Heart right ventricle (tissue), 16 donors: ENCODE measurements at regions of chr12 and their contacts with region 1.

Region 1: GRCh38 chr12:19186722-19187661 is 57.5 kb downstream of the PLEKHA5 start:
- DNase-seq: no peak
- ATAC-seq: peak in 6 of 8 donors; percentile 19 to 64 (median 44)
- H3K4me3 ChIP-seq: no peak overlapping the region
- H3K27ac ChIP-seq: peak overlapping the region in 9 of 10 donors; percentile 17 to 81 (median 41)
- H3K4me1 ChIP-seq: peaks cover 6 to 88% (median 57%) of the 10 kb centered on the region in 9 donors
- H3K27me3 ChIP-seq: no peaks in the 10 kb centered on the region
- CTCF ChIP-seq: peak; percentile 56 to 80 (median 72)

Region 2: DNA sequence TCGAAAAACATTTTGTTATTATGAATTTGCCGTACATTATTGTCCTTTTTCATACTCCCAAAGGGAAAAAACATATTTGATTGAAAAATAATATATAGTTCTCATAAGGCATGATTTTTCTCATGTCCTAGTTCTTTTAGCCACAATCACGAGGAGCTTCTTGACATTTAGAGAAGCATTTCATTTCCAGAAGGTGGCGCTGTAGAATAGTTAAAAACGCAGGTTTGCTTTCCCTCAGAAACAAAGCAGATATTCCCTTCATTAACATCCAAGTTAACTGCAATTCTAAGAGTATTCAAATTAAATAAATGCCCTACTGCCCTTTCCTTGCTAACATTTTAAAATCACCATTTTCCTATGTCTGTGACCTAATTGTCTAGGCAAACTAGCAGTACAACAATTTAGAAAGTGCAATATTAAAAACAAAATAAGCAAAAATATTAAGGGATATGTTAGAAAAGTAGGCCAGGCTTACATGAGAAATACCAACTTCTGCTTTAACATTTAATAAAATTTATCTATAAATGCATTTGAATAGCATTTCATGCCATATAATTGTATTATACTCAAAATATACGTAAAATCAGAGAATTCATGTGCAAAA is 936.6 kb before region 1 on chr12:
- intact Hi-C with region 1: loop called in 1 of 10 experiments (anchors 10 kb)
- DNase-seq: peak in 1 of 2 donors; percentile 28
- ATAC-seq: no peak
- H3K4me3 ChIP-seq: no peak overlapping the region
- H3K27ac ChIP-seq: no peak overlapping the region
- H3K4me1 ChIP-seq: no peaks in the 10 kb centered on the region
- H3K27me3 ChIP-seq: no peaks in the 10 kb centered on the region
- CTCF ChIP-seq: peak; percentile 40 to 82 (median 73)

Region 3: GRCh38 chr12:18752280-18752920 is 434.6 kb before region 1 on chr12:
- intact Hi-C with region 1: loop called in 2 of 10 experiments (anchors 5 to 10 kb)
- DNase-seq: peak; percentile 25 to 55
- ATAC-seq: peak; percentile 21 to 73 (median 42)
- H3K4me3 ChIP-seq: no peak overlapping the region
- H3K27ac ChIP-seq: peak overlapping the region in 9 of 10 donors; percentile 67 to 90 (median 76)
- H3K4me1 ChIP-seq: peaks cover 6 to 65% (median 38%) of the 10 kb centered on the region in 9 donors
- H3K27me3 ChIP-seq: no peaks in the 10 kb centered on the region
- CTCF ChIP-seq: no peak

Region 4: DNA sequence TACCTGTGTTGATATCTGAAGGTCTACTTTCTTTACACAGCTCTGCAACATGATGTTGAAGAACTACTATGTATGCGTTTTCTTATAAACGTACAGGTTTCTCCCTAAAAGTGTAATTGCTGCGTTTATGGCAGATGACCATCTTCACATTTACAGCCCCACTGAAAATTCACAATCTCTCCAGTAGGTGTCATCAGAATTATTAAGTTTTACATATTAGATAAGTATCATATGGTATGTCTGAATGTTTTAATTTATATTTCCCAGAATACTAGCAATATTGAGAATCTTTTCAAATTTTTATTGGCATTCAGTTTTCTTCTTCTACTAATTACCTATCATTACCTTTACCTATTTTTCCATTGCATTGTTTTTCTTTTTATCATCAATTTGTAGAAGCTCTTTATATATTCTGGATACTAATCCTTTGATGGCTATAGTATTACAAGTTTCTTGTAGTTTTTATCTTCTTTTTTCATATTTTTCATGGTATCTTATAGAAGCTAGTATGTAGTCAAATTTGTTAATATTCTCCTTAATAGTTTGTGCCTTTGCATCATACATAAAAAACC is 325.6 kb before region 1 on chr12:
- intact Hi-C with region 1: loop called in 9 of 10 experiments (anchors 2 to 10 kb)
- DNase-seq: no peak
- ATAC-seq: no peak
- H3K4me3 ChIP-seq: no peak overlapping the region
- H3K27ac ChIP-seq: no peak overlapping the region
- H3K4me1 ChIP-seq: peaks cover 0 to 10% (median 0%) of the 10 kb centered on the region in 9 donors
- H3K27me3 ChIP-seq: no peaks in the 10 kb centered on the region
- CTCF ChIP-seq: peak in 8 of 9 donors; percentile 19 to 61 (median 50)

Region 5: DNA sequence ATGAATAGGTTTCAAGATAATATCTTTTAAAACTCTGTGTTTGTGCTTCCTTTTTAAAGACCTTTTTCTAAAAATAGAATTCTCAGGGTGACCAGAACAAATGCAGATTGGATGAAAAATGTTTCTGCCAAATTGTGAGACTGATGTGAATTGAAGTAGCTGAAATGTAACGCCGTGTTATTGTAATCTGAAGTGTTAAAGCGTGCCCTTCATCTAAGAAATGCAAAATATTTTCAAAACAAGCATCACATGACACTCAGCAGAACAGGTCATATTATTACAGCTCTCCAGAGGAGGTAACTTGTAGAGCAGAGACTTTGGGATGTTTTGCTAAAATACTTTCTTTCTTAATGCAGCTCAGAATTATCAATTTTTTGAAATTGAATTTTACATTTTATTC is 147.5 kb before region 1 on chr12:
- intact Hi-C with region 1: loop called in 4 of 10 experiments (anchors 2 to 10 kb)
- DNase-seq: no peak
- ATAC-seq: peak in 4 of 8 donors; percentile 36 to 70 (median 48)
- H3K4me3 ChIP-seq: peak overlapping the region in 8 of 10 donors; percentile 15 to 41 (median 26)
- H3K27ac ChIP-seq: peak overlapping the region; percentile 13 to 83 (median 73)
- H3K4me1 ChIP-seq: peaks cover 0 to 51% (median 28%) of the 10 kb centered on the region in 9 donors
- H3K27me3 ChIP-seq: no peaks in the 10 kb centered on the region
- CTCF ChIP-seq: no peak

Region 6: DNA sequence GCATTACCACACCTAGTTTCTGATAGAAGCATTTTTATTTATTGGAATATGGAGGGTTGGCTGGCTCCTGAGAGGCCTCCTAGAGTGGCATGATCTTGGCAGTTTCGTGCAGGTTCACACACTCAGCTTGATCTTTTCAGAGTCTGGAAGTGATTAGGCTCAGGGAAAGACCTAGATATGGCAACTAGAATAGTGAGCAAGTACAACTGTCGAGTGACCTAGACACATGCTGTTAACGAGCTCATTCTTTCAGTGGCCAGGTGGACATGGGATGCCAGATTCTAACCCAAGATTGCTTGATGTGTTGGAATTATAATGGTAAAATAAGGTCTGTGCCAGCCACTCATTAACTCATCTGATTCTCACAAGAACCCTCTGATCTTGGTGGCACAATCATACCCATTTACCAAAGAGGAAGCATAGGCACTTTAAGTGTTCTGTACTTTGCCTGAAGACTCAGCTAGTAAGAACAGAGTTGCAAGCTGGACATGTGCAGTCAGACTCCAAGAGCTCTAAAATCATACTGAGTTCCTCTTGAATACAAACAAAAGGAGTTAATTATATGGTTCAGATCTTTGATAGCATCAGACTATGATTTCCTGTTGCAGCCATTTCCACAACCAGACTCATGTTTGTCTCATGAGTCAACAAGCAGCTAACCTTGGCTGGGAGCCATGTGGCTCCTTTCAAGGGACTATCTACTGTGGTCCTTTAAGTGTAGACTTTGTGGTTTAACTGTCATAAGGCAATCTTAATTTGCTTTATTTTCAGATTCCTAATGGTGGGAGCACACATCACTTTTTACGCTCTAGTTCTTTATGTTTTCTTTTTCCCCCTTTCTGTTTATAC is 86.7 kb after region 1 on chr12:
- intact Hi-C with region 1: loop called in 1 of 10 experiments (anchors 10 kb)
- DNase-seq: peak; percentile 64 to 71
- ATAC-seq: peak; percentile 74 to 92 (median 88)
- H3K4me3 ChIP-seq: no peak overlapping the region
- H3K27ac ChIP-seq: peak overlapping the region in 4 of 10 donors; percentile 4 to 53 (median 45)
- H3K4me1 ChIP-seq: peaks cover 0 to 22% (median 15%) of the 10 kb centered on the region in 9 donors
- H3K27me3 ChIP-seq: no peaks in the 10 kb centered on the region
- CTCF ChIP-seq: no peak